ENCODE measurements at regions of chr12 and their contacts with region 1.

Region 1: GRCh38 chr12:20376984-20377383 is 8.6 kb downstream of the PDE3A start:
- DNase-seq: peak; percentile 46
- ATAC-seq: no peak
- H3K4me3 ChIP-seq: no peak overlapping the region
- H3K27ac ChIP-seq: no peak overlapping the region
- H3K4me1 ChIP-seq: no peaks in the 10 kb centered on the region
- H3K27me3 ChIP-seq: peaks cover 20% of the 10 kb centered on the region
- CTCF ChIP-seq: peak; percentile 56

Region 2: GRCh38 chr12:19572920-19573558 is 803.9 kb before region 1 on chr12:
- CTCF ChIA-PET with region 1: no interaction called
- POLR2A ChIA-PET with region 1: no interaction called
- intact Hi-C with region 1: loop called (anchors 2 kb)
- DNase-seq: peak; percentile 70
- ATAC-seq: peak; percentile 67
- H3K4me3 ChIP-seq: no peak overlapping the region
- H3K27ac ChIP-seq: no peak overlapping the region
- H3K4me1 ChIP-seq: peaks cover 7% of the 10 kb centered on the region; the same call in 1 of the 2 replicates
- H3K27me3 ChIP-seq: no peaks in the 10 kb centered on the region
- CTCF ChIP-seq: peak; percentile 77

Region 3: GRCh38 chr12:19757317-19757877 is 619.6 kb before region 1 on chr12:
- CTCF ChIA-PET with region 1: no interaction called
- POLR2A ChIA-PET with region 1: no interaction called
- intact Hi-C with region 1: loop called (anchors 5 kb)
- DNase-seq: peak; percentile 49
- ATAC-seq: no peak
- H3K4me3 ChIP-seq: no peak overlapping the region
- H3K27ac ChIP-seq: no peak overlapping the region
- H3K4me1 ChIP-seq: peaks cover 9% of the 10 kb centered on the region
- H3K27me3 ChIP-seq: no peaks in the 10 kb centered on the region
- CTCF ChIP-seq: peak; percentile 71

Region 4: GRCh38 chr12:20264608-20265114 is 112.3 kb before region 1 on chr12:
- CTCF ChIA-PET with region 1: no interaction called
- POLR2A ChIA-PET with region 1: no interaction called
- intact Hi-C with region 1: no loop called
- DNase-seq: no peak
- ATAC-seq: no peak
- H3K4me3 ChIP-seq: no peak overlapping the region
- H3K27ac ChIP-seq: no peak overlapping the region
- H3K4me1 ChIP-seq: no peaks in the 10 kb centered on the region
- H3K27me3 ChIP-seq: no peaks in the 10 kb centered on the region
- CTCF ChIP-seq: no peak

Measured in PC-3 (cell line).